ENCODE measurements at regions of chr1 and their contacts with region 1.

Region 1: GRCh38 chr1:179365320-179366092 is at the start of gene AXDND1:
- DNase-seq: peak; percentile 96
- total RNA-seq, gene AXDND1: not detected

Region 2: GRCh38 chr1:178774263-178774662 is 591.2 kb before region 1 on chr1:
- intact Hi-C with region 1: loop called (anchors 5 kb)
- DNase-seq: no peak

Region 3: DNA sequence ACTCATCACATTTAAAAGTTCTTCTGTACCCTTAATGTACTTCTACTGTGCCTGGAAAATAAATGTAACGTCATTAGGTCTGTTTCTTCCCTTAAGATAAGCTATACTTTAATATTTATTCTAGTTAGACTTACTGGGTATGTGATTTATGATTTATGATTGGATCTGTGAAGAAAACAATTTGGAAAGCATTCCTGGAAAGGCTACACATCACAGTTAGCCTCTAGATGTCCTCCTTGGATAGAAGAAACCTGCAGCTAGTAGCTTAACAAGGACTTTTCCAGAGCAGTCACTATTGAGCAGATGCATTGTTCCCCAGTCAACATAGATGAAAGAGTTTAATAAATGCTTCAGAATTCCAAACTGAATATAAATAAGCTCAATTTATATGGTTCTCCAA is 113.8 kb before region 1 on chr1:
- intact Hi-C with region 1: loop called (anchors 5 kb)
- DNase-seq: no peak

Region 4: GRCh38 chr1:179293340-179294327 is 71.9 kb before region 1 on chr1 and contains the start of gene SOAT1:
- intact Hi-C with region 1: loop called (anchors 5 kb)
- DNase-seq: peak; percentile 96
- total RNA-seq, gene SOAT1: 9.8 TPM

Measured in cardiac septum (tissue), 1 donor.